ENCODE measurements at regions of chr6 and their contacts with region 1.

Region 1: GRCh38 chr6:156564127-156564806 is 212.9 kb upstream of the ARID1B start:
- DNase-seq: peak; percentile 54 to 76 (median 65)
- ATAC-seq: peak; percentile 95
- H3K4me3 ChIP-seq: no peak overlapping the region
- H3K4me3 Mint-ChIP-seq: peak overlapping the region in 1 of 10 donors; percentile 34
- H3K27ac ChIP-seq: no peak overlapping the region
- H3K27ac Mint-ChIP-seq: peak overlapping the region in 4 of 9 donors; percentile 21 to 49 (median 32)
- H3K4me1 ChIP-seq: peaks cover 0 to 3% of the 10 kb centered on the region in 2 donors
- H3K4me1 Mint-ChIP-seq: peaks cover 5 to 13% (median 7%) of the 10 kb centered on the region in 7 donors
- H3K27me3 ChIP-seq: no peaks in the 10 kb centered on the region
- H3K27me3 Mint-ChIP-seq: peaks cover 0 to 11% (median 8%) of the 10 kb centered on the region in 5 donors

Region 2: GRCh38 chr6:156378853-156379252 is 185.4 kb before region 1 on chr6:
- CTCF ChIA-PET with region 1: interaction called, 5 read pairs
- POLR2A ChIA-PET with region 1: no interaction called
- intact Hi-C with region 1: loop called in 1 of 2 experiments (anchors 1 kb)
- DNase-seq: peak in 6 of 9 donors; percentile 19 to 48 (median 36)
- ATAC-seq: peak; percentile 74
- H3K4me3 ChIP-seq: no peak overlapping the region
- H3K4me3 Mint-ChIP-seq: no peak overlapping the region
- H3K27ac ChIP-seq: no peak overlapping the region
- H3K27ac Mint-ChIP-seq: peak overlapping the region in 6 of 9 donors; percentile 8 to 67 (median 36)
- H3K4me1 ChIP-seq: no peaks in the 10 kb centered on the region
- H3K4me1 Mint-ChIP-seq: peaks cover 0 to 21% (median 0%) of the 10 kb centered on the region in 7 donors
- H3K27me3 ChIP-seq: no peaks in the 10 kb centered on the region
- H3K27me3 Mint-ChIP-seq: peaks cover 0 to 4% (median 0%) of the 10 kb centered on the region in 5 donors

Region 3: GRCh38 chr6:156866220-156867015 is 302.2 kb after region 1 on chr6:
- CTCF ChIA-PET with region 1: no interaction called
- POLR2A ChIA-PET with region 1: no interaction called
- intact Hi-C with region 1: loop called in 1 of 2 experiments (anchors 2 kb)
- DNase-seq: no peak
- ATAC-seq: no peak
- H3K4me3 ChIP-seq: no peak overlapping the region
- H3K4me3 Mint-ChIP-seq: peak overlapping the region in 7 of 10 donors; percentile 8 to 56 (median 26)
- H3K27ac ChIP-seq: no peak overlapping the region
- H3K27ac Mint-ChIP-seq: peak overlapping the region in 8 of 9 donors; percentile 15 to 79 (median 54)
- H3K4me1 ChIP-seq: peaks cover 0 to 5% of the 10 kb centered on the region in 2 donors
- H3K4me1 Mint-ChIP-seq: peaks cover 39 to 97% (median 90%) of the 10 kb centered on the region in 7 donors
- H3K27me3 ChIP-seq: no peaks in the 10 kb centered on the region
- H3K27me3 Mint-ChIP-seq: no peaks in the 10 kb centered on the region

Region 4: GRCh38 chr6:156953479-156954146 is 389.3 kb after region 1 on chr6:
- CTCF ChIA-PET with region 1: no interaction called
- POLR2A ChIA-PET with region 1: no interaction called
- intact Hi-C with region 1: loop called in 1 of 2 experiments (anchors 1 kb)
- DNase-seq: peak in 7 of 9 donors; percentile 67 to 85 (median 82)
- ATAC-seq: peak; percentile 95
- H3K4me3 ChIP-seq: no peak overlapping the region
- H3K4me3 Mint-ChIP-seq: peak overlapping the region in 5 of 10 donors; percentile 10 to 51 (median 37)
- H3K27ac ChIP-seq: no peak overlapping the region
- H3K27ac Mint-ChIP-seq: peak overlapping the region in 8 of 9 donors; percentile 27 to 83 (median 51)
- H3K4me1 ChIP-seq: peaks cover 15 to 20% of the 10 kb centered on the region in 2 donors
- H3K4me1 Mint-ChIP-seq: peaks cover 41 to 84% (median 77%) of the 10 kb centered on the region in 7 donors
- H3K27me3 ChIP-seq: no peaks in the 10 kb centered on the region
- H3K27me3 Mint-ChIP-seq: no peaks in the 10 kb centered on the region

Region 5: DNA sequence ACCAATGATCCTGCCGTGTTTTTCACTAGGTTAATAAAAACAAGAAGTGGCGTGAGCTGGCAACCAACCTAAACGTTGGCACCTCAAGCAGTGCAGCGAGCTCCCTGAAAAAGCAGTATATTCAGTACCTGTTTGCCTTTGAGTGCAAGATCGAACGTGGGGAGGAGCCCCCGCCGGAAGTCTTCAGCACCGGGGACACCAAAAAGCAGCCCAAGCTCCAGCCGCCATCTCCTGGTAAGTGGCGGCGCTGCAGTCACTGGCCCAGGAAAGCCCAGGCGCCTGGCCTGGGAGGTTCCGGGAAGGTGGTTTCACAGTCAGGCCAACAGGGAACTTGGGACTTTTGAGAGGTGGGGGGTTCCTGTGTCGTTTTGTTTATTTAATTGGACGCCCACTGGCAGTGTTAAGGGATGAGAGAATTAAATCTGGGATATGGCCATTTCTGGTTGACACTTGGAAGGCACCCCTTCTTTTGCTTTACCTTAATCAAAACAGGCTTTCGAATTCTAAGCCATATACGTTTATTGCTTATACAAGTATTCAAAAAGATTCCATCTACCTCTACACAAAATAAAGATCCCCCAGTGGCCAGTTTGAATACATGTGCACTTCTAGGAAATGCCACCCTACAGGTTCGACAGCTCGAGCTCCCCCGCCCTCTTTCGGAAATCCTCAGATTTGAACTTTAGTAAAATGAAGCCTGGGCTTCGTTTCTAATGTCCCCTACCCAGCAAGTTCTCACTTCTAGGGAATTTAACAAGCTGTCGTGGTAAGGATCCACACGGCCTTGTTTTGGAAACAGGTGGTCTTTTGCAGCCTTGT is 620.1 kb after region 1 on chr6:
- CTCF ChIA-PET with region 1: no interaction called
- POLR2A ChIA-PET with region 1: no interaction called
- intact Hi-C with region 1: loop called (anchors 1 kb)
- DNase-seq: peak; percentile 33 to 66 (median 58)
- ATAC-seq: peak; percentile 80
- H3K4me3 ChIP-seq: no peak overlapping the region
- H3K4me3 Mint-ChIP-seq: peak overlapping the region in 1 of 10 donors; percentile 27
- H3K27ac ChIP-seq: no peak overlapping the region
- H3K27ac Mint-ChIP-seq: peak overlapping the region in 6 of 9 donors; percentile 33 to 55 (median 48)
- H3K4me1 ChIP-seq: peaks cover 0 to 7% of the 10 kb centered on the region in 2 donors
- H3K4me1 Mint-ChIP-seq: peaks cover 11 to 32% (median 22%) of the 10 kb centered on the region in 7 donors
- H3K27me3 ChIP-seq: no peaks in the 10 kb centered on the region
- H3K27me3 Mint-ChIP-seq: no peaks in the 10 kb centered on the region

Region 6: GRCh38 chr6:157339432-157339831 is 775.2 kb after region 1 on chr6:
- CTCF ChIA-PET with region 1: no interaction called
- POLR2A ChIA-PET with region 1: no interaction called
- intact Hi-C with region 1: loop called in 1 of 2 experiments (anchors 10 kb)
- DNase-seq: no peak
- ATAC-seq: no peak
- H3K4me3 ChIP-seq: no peak overlapping the region
- H3K4me3 Mint-ChIP-seq: no peak overlapping the region
- H3K27ac ChIP-seq: no peak overlapping the region
- H3K27ac Mint-ChIP-seq: no peak overlapping the region
- H3K4me1 ChIP-seq: no peaks in the 10 kb centered on the region
- H3K4me1 Mint-ChIP-seq: peaks cover 0 to 2% (median 0%) of the 10 kb centered on the region in 7 donors
- H3K27me3 ChIP-seq: no peaks in the 10 kb centered on the region
- H3K27me3 Mint-ChIP-seq: peaks cover 19 to 72% (median 24%) of the 10 kb centered on the region in 5 donors

Measured in naive thymus-derived CD4-positive, alpha-beta T cell (primary cell).